ENCODE measurements at regions of chr2 and their contacts with region 1.

Region 1: DNA sequence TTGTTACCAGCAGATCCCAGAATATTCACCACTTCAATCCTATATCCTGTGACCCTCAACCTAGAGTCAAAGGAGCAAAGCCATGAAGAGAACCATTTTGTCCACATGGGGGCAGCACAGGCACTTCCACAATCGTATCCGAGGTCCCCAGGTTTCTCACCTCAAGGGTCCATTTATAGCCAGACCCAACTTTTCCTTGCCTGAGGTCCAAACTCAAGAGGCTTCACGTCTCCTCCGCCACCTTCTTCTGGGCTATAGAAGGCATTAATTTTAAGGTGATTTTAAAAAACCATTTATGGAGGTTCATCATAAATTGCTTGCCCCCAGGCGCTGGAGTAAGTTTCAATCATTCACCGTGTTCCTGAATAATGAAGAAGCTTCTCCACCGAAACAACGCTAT is 111.6 kb upstream of the NABP1 start:
- DNase-seq: peak; percentile 39
- H3K4me3 Mint-ChIP-seq: no peak overlapping the region
- H3K27ac Mint-ChIP-seq: no peak overlapping the region
- H3K4me1 Mint-ChIP-seq: peaks cover 34% of the 10 kb centered on the region
- H3K27me3 Mint-ChIP-seq: peaks cover 57% of the 10 kb centered on the region

Region 2: DNA sequence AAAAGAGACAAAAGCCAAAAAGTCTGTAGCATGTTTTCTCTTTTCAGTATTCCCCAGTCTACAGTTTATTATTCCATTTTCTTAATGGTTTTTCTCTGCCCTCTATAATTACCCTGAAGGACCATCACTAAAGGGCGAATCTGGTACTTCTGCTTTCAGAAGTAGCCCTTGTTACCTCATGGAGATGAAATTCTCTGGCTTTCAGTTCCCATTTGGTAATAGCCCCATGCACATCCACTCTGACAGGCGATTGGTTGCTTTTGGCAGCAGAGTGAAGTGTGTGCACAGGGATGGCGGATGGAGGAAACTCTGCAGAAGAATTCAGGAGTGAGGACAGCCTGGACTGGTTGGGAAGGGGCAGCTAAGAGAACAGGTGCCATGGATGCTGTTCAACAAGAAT is 45.3 kb after region 1 on chr2:
- intact Hi-C with region 1: no loop called
- DNase-seq: no peak
- H3K4me3 Mint-ChIP-seq: no peak overlapping the region
- H3K27ac Mint-ChIP-seq: no peak overlapping the region
- H3K4me1 Mint-ChIP-seq: peaks cover 9% of the 10 kb centered on the region
- H3K27me3 Mint-ChIP-seq: peaks cover under 1% of the 10 kb centered on the region

Region 3: GRCh38 chr2:191691016-191691735 is 124.8 kb after region 1 on chr2:
- intact Hi-C with region 1: loop called (anchors 1 kb)
- DNase-seq: no peak
- H3K4me3 Mint-ChIP-seq: no peak overlapping the region
- H3K27ac Mint-ChIP-seq: peak overlapping the region; percentile 70
- H3K4me1 Mint-ChIP-seq: peaks cover 43% of the 10 kb centered on the region
- H3K27me3 Mint-ChIP-seq: no peaks in the 10 kb centered on the region

Region 4: GRCh38 chr2:191748059-191748461 is 181.7 kb after region 1 on chr2:
- intact Hi-C with region 1: loop called (anchors 5 kb)
- DNase-seq: no peak
- H3K4me3 Mint-ChIP-seq: no peak overlapping the region
- H3K27ac Mint-ChIP-seq: no peak overlapping the region
- H3K4me1 Mint-ChIP-seq: peaks cover 12% of the 10 kb centered on the region
- H3K27me3 Mint-ChIP-seq: peaks cover 19% of the 10 kb centered on the region